ENCODE measurements at regions of chr13 and their contacts with region 1.

Region 1: GRCh38 chr13:23771552-23771951 is 117.6 kb downstream of the MIPEP start:
- DNase-seq: peak; percentile 73
- H3K4me3 ChIP-seq: peak overlapping the region in 1 of 3 experiments; percentile 12
- H3K27ac ChIP-seq: peak overlapping the region; percentile 61
- H3K4me1 ChIP-seq: peaks cover 22% of the 10 kb centered on the region
- H3K27me3 ChIP-seq: no peaks in the 10 kb centered on the region
- CTCF ChIP-seq: no peak

Region 2: DNA sequence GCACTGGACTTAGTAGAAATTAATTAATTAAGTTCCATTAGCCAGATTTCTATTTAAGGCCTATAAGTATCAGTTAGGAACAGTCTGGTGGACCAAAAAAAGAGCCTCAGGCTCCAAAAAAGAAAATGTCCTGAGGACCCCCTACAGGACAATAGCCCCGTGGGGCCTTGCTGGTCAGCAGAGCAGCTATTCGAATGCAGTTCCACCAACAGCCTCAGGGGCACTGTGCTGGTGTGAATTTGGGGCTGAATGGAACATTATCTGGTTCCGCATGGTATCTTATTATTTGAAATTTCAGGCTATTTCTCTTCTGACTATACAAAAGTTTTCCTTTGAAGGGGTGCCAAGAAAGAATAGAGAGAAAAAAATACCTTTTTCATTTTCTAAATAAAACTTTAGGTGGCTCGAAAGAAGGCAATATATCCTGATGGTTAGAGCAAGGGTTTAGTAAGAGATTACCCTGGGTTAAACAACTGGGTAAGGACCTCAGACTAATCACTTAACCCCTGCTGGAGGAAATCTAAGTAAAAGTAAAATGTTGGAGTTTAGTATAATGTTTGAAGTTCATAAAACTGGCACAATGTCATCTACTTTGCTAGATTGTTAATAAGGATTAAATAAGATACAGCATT is 29.6 kb before region 1 on chr13:
- CTCF ChIA-PET with region 1: no interaction called
- dilution Hi-C with region 1: no loop called
- in situ Hi-C with region 1: no loop called
- intact Hi-C with region 1: loop called (anchors 2 kb)
- DNase-seq: no peak
- H3K4me3 ChIP-seq: no peak overlapping the region
- H3K27ac ChIP-seq: no peak overlapping the region
- H3K4me1 ChIP-seq: peaks cover 15% of the 10 kb centered on the region
- H3K27me3 ChIP-seq: no peaks in the 10 kb centered on the region
- CTCF ChIP-seq: peak; percentile 43 to 48

Region 3: DNA sequence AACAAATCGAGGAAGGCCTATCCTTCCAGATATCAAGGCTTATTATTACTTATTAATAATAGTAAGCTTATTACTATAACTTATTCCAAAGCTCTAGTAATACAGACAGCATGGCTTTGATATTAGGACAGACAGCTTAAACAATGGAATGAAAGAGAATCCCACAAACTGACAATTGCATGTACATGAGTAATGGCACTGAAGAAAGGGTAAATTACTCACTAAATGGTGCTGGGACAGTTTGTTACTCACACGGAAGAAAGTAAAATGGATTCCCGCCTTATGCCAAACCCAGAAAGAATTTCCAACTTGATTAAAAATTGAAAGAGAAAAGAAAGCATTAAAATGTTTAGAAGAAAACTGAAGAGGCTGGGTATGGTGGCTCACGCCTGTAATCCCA is 57.3 kb after region 1 on chr13:
- CTCF ChIA-PET with region 1: no interaction called
- dilution Hi-C with region 1: no loop called
- in situ Hi-C with region 1: no loop called
- intact Hi-C with region 1: loop called (anchors 5 kb)
- DNase-seq: peak; percentile 43
- H3K4me3 ChIP-seq: no peak overlapping the region
- H3K27ac ChIP-seq: no peak overlapping the region
- H3K4me1 ChIP-seq: no peaks in the 10 kb centered on the region
- H3K27me3 ChIP-seq: no peaks in the 10 kb centered on the region
- CTCF ChIP-seq: no peak